ENCODE measurements at regions of chr1 and their contacts with region 1.

Region 1: DNA sequence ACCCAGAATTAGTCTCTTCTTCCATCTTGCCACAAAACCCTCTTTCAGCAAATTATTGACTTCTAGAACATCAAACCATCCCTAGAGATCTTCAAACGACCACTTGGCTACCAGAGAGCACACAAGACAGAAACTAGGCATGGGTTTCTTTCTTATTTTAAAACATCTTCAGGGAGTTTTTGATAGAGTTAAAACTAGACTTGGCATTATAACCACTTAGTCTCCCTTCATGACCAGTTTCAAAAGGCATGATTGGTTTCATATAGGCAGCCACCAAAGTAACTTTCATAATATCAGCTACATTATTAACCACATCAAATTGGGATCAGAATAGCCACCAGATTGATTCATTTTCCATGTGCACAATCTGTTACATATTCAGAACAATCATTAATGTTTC is 368.4 kb upstream of the GREM2 start:
- DNase-seq: no peak
- H3K4me3 Mint-ChIP-seq: no peak overlapping the region
- H3K27ac Mint-ChIP-seq: no peak overlapping the region
- H3K4me1 Mint-ChIP-seq: peaks cover 10% of the 10 kb centered on the region
- H3K27me3 Mint-ChIP-seq: no peaks in the 10 kb centered on the region
- CTCF ChIP-seq: no peak

Region 2: GRCh38 chr1:241022366-241022765 is 42.0 kb after region 1 on chr1:
- CTCF ChIA-PET with region 1: no interaction called
- intact Hi-C with region 1: no loop called
- DNase-seq: no peak
- H3K4me3 Mint-ChIP-seq: no peak overlapping the region
- H3K27ac Mint-ChIP-seq: no peak overlapping the region
- H3K4me1 Mint-ChIP-seq: no peaks in the 10 kb centered on the region
- H3K27me3 Mint-ChIP-seq: no peaks in the 10 kb centered on the region
- CTCF ChIP-seq: no peak

Region 3: DNA sequence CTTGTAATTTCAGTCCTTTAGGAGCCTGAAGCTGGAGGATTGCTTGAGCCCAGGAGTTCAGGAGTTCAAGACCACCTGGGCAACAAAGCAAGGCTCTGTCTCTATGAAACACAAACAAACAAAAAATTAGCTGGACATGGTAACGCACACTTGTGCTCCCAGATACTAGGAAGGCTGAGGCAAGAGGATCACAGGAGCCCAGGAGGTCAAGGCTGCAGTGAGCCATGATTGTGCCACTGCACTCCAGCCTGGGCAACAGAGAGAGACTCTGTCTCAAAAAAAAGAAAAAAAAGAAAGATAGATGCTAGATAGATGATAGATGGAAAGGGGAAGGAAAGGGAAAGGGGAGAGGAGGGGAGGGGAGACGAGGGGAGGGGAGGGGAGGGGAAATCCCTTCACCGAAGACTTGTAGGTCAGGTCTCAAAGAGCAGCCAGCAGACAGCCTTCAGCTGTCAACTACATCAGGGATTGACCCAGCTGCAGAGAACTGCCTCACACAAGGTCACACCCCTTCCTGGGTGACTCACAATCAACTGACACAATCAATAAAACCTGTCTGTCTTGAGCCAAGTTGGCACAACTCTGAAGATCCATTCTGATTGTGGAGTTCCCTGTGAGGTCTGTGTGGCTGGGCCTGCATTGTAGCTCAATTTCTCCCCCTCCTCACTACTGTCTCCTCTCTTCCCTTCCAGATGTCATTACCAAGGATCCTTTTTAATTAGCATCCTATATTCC is 176.1 kb after region 1 on chr1:
- CTCF ChIA-PET with region 1: no interaction called
- intact Hi-C with region 1: loop called (anchors 5 kb)
- DNase-seq: peak; percentile 85
- H3K4me3 Mint-ChIP-seq: peak overlapping the region; percentile 45
- H3K27ac Mint-ChIP-seq: peak overlapping the region; percentile 92
- H3K4me1 Mint-ChIP-seq: peaks cover 21% of the 10 kb centered on the region
- H3K27me3 Mint-ChIP-seq: no peaks in the 10 kb centered on the region
- CTCF ChIP-seq: no peak

Region 4: DNA sequence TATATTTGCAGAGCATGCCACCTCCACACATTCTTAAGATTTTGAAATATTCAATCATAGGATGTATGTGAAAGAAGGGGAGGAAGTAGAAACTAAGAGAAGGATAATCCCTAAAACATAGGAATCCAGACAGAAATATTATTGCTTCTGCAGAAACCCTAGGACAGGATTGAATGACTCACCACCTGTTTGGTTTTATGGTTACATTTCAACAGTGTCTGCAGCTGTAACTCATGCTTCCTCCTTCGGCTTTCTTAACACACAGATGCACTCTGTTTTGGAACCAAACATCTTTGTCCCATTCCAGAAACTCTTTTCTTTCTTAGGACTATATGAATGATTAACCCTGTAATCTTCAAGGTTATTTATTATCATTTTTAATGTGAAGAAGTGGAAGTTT is 356.0 kb after region 1 on chr1:
- CTCF ChIA-PET with region 1: no interaction called
- intact Hi-C with region 1: loop called (anchors 5 kb)
- DNase-seq: peak; percentile 21
- H3K4me3 Mint-ChIP-seq: no peak overlapping the region
- H3K27ac Mint-ChIP-seq: no peak overlapping the region
- H3K4me1 Mint-ChIP-seq: peaks cover 10% of the 10 kb centered on the region
- H3K27me3 Mint-ChIP-seq: no peaks in the 10 kb centered on the region
- CTCF ChIP-seq: no peak